Cardiac septum (tissue), 1 donor: ENCODE measurements at regions of chr1 and their contacts with region 1.

Region 1: DNA sequence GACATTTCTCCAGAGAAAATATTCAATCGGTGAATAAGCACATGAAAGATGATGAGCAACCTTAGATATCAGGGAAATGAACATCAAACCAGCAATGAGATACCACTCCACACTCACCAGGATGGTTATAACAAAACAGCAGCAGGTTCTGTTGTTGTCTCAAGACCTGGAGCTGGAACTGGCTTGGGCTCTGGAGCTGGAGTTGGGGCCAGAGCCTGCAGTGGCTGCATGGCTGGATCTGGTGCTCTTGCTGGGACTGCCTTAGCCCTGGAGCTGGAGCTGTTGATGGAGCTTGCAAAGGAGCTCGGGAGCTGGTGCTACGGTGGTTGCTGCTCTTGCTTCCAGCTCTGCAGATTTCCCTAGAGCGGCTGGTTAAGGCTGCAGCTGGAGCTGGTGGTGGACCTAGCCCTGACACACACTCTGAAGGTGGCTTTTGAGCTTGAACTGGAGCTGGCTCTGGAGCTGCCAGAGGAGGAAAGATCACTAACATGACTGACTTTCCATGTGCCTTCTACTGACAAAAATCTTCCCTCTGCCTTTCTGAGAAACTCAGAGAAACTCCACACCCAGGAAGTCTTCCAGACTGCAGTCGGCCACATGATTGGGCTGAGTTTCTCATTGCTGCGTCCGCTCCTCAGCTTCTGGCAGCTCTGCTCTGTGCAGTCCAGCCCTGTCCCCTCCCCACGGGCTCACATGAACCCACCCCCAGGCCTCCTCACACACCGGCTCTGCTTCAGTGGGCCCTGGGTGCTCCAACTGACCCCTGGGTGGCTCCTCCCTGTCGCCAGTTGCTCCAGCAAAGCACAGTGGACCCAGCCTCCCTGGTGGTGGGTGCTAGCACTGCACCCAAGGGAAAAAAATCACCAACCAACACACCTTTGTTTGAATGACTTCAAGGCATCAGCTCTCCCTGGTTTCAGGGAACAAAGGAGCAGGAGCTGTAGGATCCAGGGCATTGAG is 139.1 kb upstream of the FMN2 start:
- DNase-seq: no peak

Region 2: GRCh38 chr1:239976130-239976968 is 23.7 kb after region 1 on chr1:
- intact Hi-C with region 1: loop called (anchors 1 kb)
- DNase-seq: no peak